Activated T-helper 1 cell treated with anti-CD3 and anti-CD28 coated beads, Interleukin-12 subunit alpha, Interleukin-12 subunit beta, Interleukin-2, Interleukin-4 antibody, amounts not matched to agents 30 ng/mL and 10 ng/mL and 1 ng/mL, durations not matched to agents 14 hours and 24 hours and 36 hours (primary cell): ENCODE measurements at regions of chr17 and their contacts with region 1.

Region 1: GRCh38 chr17:35521150-35521549 is 16.3 kb downstream of the SLFN12L start:
- DNase-seq: no peak
- H3K4me3 Mint-ChIP-seq: peak overlapping the region; percentile 71
- H3K27ac Mint-ChIP-seq: peak overlapping the region; percentile 70
- H3K4me1 Mint-ChIP-seq: peaks cover 100% of the 10 kb centered on the region
- H3K27me3 Mint-ChIP-seq: no peaks in the 10 kb centered on the region

Region 2: GRCh38 chr17:35498448-35499178 is 22.5 kb before region 1 on chr17:
- intact Hi-C with region 1: loop called (anchors 2 kb)
- DNase-seq: no peak
- H3K4me3 Mint-ChIP-seq: no peak overlapping the region
- H3K27ac Mint-ChIP-seq: no peak overlapping the region
- H3K4me1 Mint-ChIP-seq: peaks cover 67% of the 10 kb centered on the region
- H3K27me3 Mint-ChIP-seq: no peaks in the 10 kb centered on the region